ENCODE measurements at regions of chr4 and their contacts with region 1.

Region 1: GRCh38 chr4:48167538-48168263 is 33.7 kb upstream of the TXK start:
- DNase-seq: no peak
- ATAC-seq: no peak

Region 2: GRCh38 chr4:48109413-48110263 is 58.1 kb before region 1 on chr4:
- intact Hi-C with region 1: loop called in 1 of 2 experiments (anchors 5 kb)
- DNase-seq: no peak
- ATAC-seq: peak in 1 of 2 donors; percentile 42